Heart left ventricle (tissue), 16 donors: ENCODE measurements at regions of chr3 and their contacts with region 1.

Region 1: DNA sequence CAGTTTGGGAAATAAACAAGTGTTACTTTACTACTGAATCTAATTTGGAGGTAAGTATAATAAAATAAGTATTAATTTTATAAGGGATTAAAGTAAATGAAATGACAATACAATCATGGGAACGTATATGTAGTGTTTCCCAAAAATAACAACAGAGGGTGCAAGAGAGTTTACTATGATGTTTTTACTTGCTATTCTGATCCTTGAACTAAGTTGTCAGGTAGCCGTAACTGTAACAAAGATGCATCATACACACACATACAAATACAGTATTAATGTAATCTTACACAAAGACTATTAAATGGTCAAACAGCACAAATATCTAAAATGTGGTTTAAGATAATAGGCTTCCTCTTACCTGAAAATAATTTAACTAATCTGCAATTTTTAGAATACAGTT is 311.4 kb downstream of the TBC1D5 start:
- DNase-seq: no peak
- ATAC-seq: peak in 1 of 4 donors; percentile 73
- H3K4me3 ChIP-seq: no peak overlapping the region
- H3K27ac ChIP-seq: no peak overlapping the region
- H3K4me1 ChIP-seq: peaks cover 0 to 3% (median 0%) of the 10 kb centered on the region in 12 donors
- H3K27me3 ChIP-seq: no peaks in the 10 kb centered on the region
- CTCF ChIP-seq: peak; percentile 24 to 70 (median 54)
- POLR2A ChIP-seq: no peak

Region 2: DNA sequence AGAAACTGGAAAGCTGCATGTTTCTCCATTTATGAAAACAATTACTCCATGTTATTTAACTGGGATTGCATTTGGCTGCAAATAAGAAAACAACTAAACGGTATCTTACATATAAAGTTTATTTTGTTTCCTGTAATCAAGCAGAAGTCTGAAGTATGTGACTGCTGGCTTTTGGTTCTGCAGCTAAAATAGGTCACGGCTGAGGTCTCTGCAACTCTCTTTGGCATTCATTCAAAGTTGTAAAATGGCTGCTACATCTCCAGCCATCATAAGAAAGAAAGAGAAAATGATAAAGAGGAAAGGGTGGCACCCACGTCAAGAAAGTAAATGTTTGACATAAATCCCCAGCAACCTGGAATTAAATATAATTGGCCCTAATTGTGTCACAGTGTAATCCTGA is 94.7 kb before region 1 on chr3:
- intact Hi-C with region 1: no loop called
- DNase-seq: no peak
- ATAC-seq: peak in 1 of 4 donors; percentile 42
- H3K4me3 ChIP-seq: no peak overlapping the region
- H3K27ac ChIP-seq: peak overlapping the region in 2 of 12 donors; percentile 2 to 9
- H3K4me1 ChIP-seq: peaks cover 0 to 30% (median 9%) of the 10 kb centered on the region in 12 donors
- H3K27me3 ChIP-seq: no peaks in the 10 kb centered on the region
- CTCF ChIP-seq: no peak
- POLR2A ChIP-seq: no peak

Region 3: DNA sequence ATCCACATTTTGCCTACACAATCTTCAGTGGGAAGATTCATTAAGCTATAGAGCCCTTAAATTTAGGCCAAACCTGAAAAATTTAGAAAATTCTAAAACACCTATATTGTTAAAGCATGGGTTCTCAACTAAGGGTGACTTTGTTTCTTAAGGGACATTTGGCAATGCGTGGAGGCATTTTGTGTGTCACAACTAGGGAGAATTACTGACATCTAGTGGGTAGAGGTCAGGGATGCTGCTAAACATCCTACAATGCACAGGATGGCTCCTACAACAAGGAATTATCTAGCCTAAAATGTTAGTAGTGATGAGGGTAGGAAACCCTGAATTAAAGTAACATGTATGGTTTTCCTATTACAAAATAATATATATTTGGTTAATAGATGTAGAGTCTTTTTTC is 255.6 kb after region 1 on chr3:
- intact Hi-C with region 1: loop called in 5 of 10 experiments (anchors 2 to 10 kb)
- DNase-seq: no peak
- ATAC-seq: peak in 3 of 4 donors; percentile 54 to 65 (median 63)
- H3K4me3 ChIP-seq: no peak overlapping the region
- H3K27ac ChIP-seq: no peak overlapping the region
- H3K4me1 ChIP-seq: peaks cover 0 to 8% (median 0%) of the 10 kb centered on the region in 12 donors
- H3K27me3 ChIP-seq: no peaks in the 10 kb centered on the region
- CTCF ChIP-seq: peak in 11 of 12 donors; percentile 9 to 55 (median 31)
- POLR2A ChIP-seq: no peak

Region 4: DNA sequence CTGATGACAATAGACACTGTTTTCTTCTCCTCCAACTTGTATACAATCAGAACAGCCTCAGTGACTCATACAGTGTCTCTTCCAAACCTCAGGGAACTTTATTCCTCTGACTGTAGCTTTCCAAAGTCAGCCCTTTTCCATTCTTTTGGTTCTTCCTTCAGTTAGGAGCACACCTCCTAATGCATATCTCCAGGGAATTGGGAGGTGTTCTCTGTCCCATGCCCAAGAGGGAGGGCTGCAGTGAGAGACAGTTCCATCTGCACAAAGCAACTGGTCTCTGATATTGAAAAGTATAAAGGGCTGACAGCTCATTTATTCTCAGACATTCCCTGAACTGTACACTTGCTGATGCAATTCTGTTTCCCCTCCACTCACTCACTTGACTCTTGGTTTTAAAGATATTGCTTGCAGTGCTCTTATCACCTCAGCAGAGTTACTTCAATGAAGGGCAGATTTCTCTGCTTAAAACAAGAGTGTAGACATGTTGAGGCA is 649.2 kb after region 1 on chr3:
- intact Hi-C with region 1: no loop called
- DNase-seq: no peak
- ATAC-seq: no peak
- H3K4me3 ChIP-seq: no peak overlapping the region
- H3K27ac ChIP-seq: no peak overlapping the region
- H3K4me1 ChIP-seq: no peaks in the 10 kb centered on the region
- H3K27me3 ChIP-seq: peaks cover 0 to 4% (median 0%) of the 10 kb centered on the region in 9 donors
- CTCF ChIP-seq: no peak
- POLR2A ChIP-seq: no peak